ENCODE measurements at regions of chr20 and their contacts with region 1.

Region 1: GRCh38 chr20:34629342-34629741 is 47.5 kb downstream of the PIGU start:
- DNase-seq: peak; percentile 49
- H3K4me3 ChIP-seq: no peak overlapping the region
- H3K27ac ChIP-seq: peak overlapping the region; percentile 83
- H3K4me1 ChIP-seq: peaks cover 19% of the 10 kb centered on the region
- H3K27me3 ChIP-seq: no peaks in the 10 kb centered on the region
- CTCF ChIP-seq: no peak

Region 2: DNA sequence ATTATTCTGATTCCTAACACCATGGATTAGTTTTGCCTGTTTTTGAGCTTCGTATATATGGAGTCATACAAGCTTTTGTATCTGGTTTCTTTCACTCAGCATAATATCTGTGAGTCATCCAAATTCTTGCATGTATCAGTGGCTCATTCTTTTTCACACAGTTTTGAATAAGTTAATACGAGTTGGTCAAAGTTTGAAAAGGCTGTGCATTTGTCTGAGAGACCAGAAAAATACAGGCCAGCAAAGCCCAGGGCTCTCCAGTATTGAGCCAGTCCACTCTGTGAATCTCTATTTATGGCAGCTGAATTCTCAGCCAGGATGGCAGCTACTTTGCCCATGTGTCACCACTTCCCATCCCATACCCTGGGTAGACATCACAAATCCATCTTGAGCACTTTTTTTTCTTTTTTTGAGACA is 825.4 kb before region 1 on chr20:
- intact Hi-C with region 1: loop called (anchors 5 kb)
- DNase-seq: no peak
- H3K4me3 ChIP-seq: no peak overlapping the region
- H3K27ac ChIP-seq: no peak overlapping the region
- H3K4me1 ChIP-seq: no peaks in the 10 kb centered on the region
- H3K27me3 ChIP-seq: no peaks in the 10 kb centered on the region
- CTCF ChIP-seq: no peak

Measured in left ventricle myocardium inferior (tissue), 1 donor.